ENCODE measurements at regions of chr9 and their contacts with region 1.

Region 1: GRCh38 chr9:108761655-108762347 is 94.0 kb downstream of the ACTL7B start:
- DNase-seq: peak; percentile 31
- H3K4me3 ChIP-seq: no peak overlapping the region
- H3K27ac ChIP-seq: no peak overlapping the region
- H3K4me1 ChIP-seq: no peaks in the 10 kb centered on the region
- H3K27me3 ChIP-seq: no peaks in the 10 kb centered on the region
- CTCF ChIP-seq: peak; percentile 86 to 95

Region 2: DNA sequence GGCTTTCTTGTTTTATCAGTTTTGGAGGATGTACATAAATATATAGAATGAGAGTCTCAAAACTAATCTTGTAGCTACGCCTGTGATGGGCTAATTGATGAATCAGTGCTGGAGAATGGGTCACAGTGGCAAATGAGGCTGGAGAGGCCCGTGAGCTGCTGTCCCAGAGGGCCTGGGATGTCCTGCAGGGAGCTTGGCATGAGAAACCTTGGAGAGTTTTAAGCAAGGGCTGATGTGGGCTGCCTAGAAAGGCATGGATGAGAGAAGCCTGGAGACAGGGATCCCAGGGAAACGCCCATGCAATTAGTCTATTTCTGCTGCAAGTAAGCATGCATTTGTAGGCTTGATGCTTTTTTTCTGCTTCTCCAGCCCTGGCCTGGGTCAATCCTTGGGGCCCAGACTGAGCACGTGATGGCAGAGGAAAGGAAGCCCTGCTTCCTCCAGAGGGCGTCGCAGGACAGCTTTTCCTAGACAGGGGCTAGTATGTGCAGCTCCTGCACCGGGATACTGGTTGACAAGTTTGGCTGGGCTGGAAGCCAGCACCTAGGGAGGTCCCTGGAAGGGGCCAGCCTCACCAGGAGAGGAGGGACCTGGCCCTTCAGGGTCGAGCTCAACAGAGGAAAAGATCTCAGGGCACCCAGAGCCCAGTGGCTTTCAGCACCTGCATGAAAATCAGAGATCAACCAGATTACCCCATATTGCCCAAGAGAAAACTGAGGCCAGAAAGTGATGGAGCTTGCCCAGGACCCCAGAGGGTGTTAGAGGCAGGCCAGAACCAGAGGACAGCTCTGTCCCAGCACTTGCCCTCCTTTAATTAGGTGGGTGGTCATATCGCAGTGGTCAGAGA is 1339.6 kb before region 1 on chr9:
- CTCF ChIA-PET with region 1: no interaction called
- dilution Hi-C with region 1: no loop called
- in situ Hi-C with region 1: no loop called
- intact Hi-C with region 1: loop called (anchors 2 kb)
- DNase-seq: peak; percentile 59
- H3K4me3 ChIP-seq: no peak overlapping the region
- H3K27ac ChIP-seq: no peak overlapping the region
- H3K4me1 ChIP-seq: peaks cover 3% of the 10 kb centered on the region
- H3K27me3 ChIP-seq: no peaks in the 10 kb centered on the region
- CTCF ChIP-seq: peak; percentile 65 to 81

Region 3: DNA sequence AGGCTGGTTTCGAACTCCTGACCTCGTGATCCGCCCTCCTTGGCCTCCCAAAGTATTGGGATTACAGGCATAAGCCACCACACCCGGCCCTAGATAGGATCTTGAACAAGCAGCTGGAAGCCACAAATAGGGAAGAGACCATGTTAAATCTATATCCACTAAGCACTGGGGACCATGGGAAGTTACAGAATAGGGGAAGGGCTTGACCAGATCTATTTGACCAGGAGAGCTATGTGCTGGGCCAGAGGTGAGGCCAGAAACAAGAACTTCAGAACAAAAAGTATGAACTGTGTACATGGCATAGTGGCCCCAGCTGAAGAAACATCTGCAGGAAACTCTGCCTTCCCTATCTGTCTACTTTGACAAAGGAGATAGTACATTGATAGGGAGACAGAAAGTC is 1283.0 kb before region 1 on chr9:
- CTCF ChIA-PET with region 1: no interaction called
- dilution Hi-C with region 1: loop called (anchors 5 kb)
- in situ Hi-C with region 1: loop called in 1 of 2 experiments (anchors 25 kb)
- intact Hi-C with region 1: loop called (anchors 5 kb)
- DNase-seq: no peak
- H3K4me3 ChIP-seq: no peak overlapping the region
- H3K27ac ChIP-seq: no peak overlapping the region
- H3K4me1 ChIP-seq: peaks cover 4% of the 10 kb centered on the region
- H3K27me3 ChIP-seq: no peaks in the 10 kb centered on the region
- CTCF ChIP-seq: no peak

Region 4: GRCh38 chr9:108073823-108074222 is 688.0 kb before region 1 on chr9:
- CTCF ChIA-PET with region 1: interaction called, 20 read pairs
- dilution Hi-C with region 1: no loop called
- in situ Hi-C with region 1: no loop called
- intact Hi-C with region 1: no loop called
- DNase-seq: no peak
- H3K4me3 ChIP-seq: no peak overlapping the region
- H3K27ac ChIP-seq: no peak overlapping the region
- H3K4me1 ChIP-seq: no peaks in the 10 kb centered on the region
- H3K27me3 ChIP-seq: no peaks in the 10 kb centered on the region
- CTCF ChIP-seq: no peak

Region 5: DNA sequence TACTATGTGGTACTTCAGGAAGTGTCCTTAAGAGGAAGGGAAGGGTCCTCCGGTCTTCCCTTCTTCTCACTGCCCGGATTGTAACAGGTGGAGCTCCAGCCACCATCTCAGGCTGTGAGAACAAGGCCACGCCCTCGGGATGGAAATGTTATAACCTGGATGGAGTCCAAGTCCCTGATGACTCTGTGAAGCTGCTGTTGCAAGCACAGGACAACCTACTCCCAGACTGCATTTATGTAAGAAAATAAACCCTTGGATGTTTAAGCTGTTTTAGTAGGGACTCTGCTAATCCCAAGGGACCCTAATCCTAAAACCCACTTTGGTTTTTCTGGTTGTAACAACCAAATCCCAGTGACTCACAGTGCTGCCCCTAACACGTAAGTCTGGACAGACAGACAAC is 127.6 kb before region 1 on chr9:
- CTCF ChIA-PET with region 1: no interaction called
- dilution Hi-C with region 1: no loop called
- in situ Hi-C with region 1: no loop called
- intact Hi-C with region 1: loop called (anchors 1 kb)
- DNase-seq: peak; percentile 74
- H3K4me3 ChIP-seq: peak overlapping the region in 1 of 3 experiments; percentile 12
- H3K27ac ChIP-seq: peak overlapping the region; percentile 98
- H3K4me1 ChIP-seq: peaks cover 20% of the 10 kb centered on the region
- H3K27me3 ChIP-seq: no peaks in the 10 kb centered on the region
- CTCF ChIP-seq: no peak

Region 6: DNA sequence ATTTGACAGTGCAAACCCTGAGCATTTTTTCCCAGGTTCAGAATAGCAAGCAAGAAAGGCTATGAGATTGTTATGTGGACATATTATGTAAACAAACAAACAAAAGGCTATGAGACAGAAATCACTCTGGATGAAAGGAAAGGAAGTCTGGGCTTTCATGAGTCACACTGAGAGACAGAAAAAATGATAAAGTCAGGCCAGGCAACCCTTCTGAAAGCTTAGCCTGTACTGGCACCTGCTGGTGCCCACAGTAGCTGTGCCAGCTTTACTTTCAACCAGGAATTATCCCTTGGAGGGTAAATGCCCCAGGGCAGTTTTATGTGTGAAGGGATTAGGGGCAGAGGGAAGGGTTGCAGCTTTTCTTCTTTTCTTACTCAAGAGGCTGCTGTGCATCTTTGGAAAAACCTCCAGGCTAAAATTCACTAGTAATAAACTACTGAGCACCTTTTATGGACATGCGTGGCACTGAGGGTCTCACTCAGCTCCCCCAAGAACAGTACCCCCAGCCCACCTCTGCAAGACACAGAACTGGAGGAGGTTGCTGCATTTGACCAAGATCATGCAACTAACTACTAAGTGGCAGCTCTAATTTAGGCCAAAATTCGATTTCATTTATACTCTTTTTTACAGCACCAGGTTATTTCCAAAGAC is 52.3 kb after region 1 on chr9:
- CTCF ChIA-PET with region 1: no interaction called
- dilution Hi-C with region 1: no loop called
- in situ Hi-C with region 1: no loop called
- intact Hi-C with region 1: loop called (anchors 2 kb)
- DNase-seq: peak; percentile 71
- H3K4me3 ChIP-seq: no peak overlapping the region
- H3K27ac ChIP-seq: no peak overlapping the region
- H3K4me1 ChIP-seq: peaks cover 14% of the 10 kb centered on the region
- H3K27me3 ChIP-seq: no peaks in the 10 kb centered on the region
- CTCF ChIP-seq: peak; percentile 84 to 85

Region 7: GRCh38 chr9:109574068-109574882 is 812.5 kb after region 1 on chr9:
- CTCF ChIA-PET with region 1: no interaction called
- dilution Hi-C with region 1: no loop called
- in situ Hi-C with region 1: no loop called
- intact Hi-C with region 1: no loop called
- DNase-seq: peak; percentile 43
- H3K4me3 ChIP-seq: no peak overlapping the region
- H3K27ac ChIP-seq: no peak overlapping the region
- H3K4me1 ChIP-seq: peaks cover 5% of the 10 kb centered on the region
- H3K27me3 ChIP-seq: no peaks in the 10 kb centered on the region
- CTCF ChIP-seq: peak; percentile 67 to 74